Aorta (tissue), 5 donors: ENCODE measurements at regions of chr6 and their contacts with region 1.

Region 1: DNA sequence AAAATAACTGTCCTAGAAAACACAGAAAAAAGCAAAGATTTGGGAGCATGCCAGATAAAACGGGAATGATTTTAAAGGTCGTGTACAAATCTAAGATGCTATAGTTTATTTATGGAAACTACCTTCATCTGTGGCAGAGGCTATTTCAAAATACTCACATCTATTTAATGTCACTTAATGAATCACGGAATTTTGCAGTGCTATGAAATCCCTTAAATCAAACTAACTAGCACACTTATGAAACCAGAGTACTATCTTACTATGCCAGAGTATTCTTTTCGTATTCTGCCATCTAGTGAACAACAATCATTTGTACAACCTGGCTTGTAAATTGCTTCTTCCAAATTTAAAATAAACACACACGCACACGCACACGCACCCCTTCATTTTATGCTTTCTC is 77.9 kb upstream of the BMP5 start:
- DNase-seq: no peak
- ATAC-seq: peak; percentile 50
- H3K4me3 ChIP-seq: no peak overlapping the region
- H3K27ac ChIP-seq: no peak overlapping the region
- H3K4me1 ChIP-seq: no peaks in the 10 kb centered on the region
- H3K27me3 ChIP-seq: no peaks in the 10 kb centered on the region

Region 2: GRCh38 chr6:55445648-55446204 is 507.6 kb before region 1 on chr6:
- intact Hi-C with region 1: loop called in 1 of 2 experiments (anchors 10 kb)
- DNase-seq: no peak
- ATAC-seq: no peak
- H3K4me3 ChIP-seq: no peak overlapping the region
- H3K27ac ChIP-seq: no peak overlapping the region
- H3K4me1 ChIP-seq: no peaks in the 10 kb centered on the region
- H3K27me3 ChIP-seq: no peaks in the 10 kb centered on the region